PC-3 (cell line): ENCODE measurements at regions of chr5 and their contacts with region 1.

Region 1: DNA sequence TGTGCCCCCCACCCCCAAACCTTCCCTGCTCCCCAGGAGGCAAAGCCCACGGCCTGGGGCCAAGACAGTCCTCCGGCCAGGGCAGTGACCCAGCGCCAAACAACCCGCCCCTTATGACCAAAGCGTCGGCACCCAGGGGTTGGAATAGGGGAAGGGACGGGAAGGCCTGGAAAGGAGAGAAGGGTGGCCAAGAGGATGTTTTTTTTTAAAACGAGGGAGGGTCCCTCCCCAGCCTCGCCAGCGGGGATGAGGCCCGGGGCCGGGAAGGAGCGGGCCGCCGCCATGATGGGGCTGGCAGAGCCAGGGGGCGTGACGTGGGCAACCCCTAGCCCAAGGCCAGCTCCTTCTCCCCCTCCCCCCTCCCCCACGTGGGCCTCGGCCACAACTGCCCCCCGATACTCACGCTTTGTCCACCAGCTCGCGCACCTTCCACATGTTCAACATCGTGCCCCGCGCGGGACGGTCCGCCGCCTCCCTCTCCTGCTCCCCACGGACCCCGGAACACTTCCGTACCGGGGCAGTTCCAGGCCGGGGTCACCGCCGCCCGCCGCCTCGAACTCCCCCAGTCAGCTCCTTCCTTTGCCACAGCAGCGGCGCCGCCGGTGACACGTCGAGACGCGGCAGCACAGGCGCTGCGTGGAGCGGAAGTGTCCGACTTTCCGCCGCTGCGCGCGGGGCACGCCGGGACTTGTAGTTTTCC is at the start of gene CLINT1:
- DNase-seq: peak; percentile 98
- ATAC-seq: peak; percentile 96
- H3K4me3 ChIP-seq: peak within 1 kb of the TSS; percentile 93
- H3K27ac ChIP-seq: peak within 1 kb of the TSS; percentile 41
- H3K4me1 ChIP-seq: peaks cover 19% of the 10 kb centered on the region
- H3K27me3 ChIP-seq: no peaks in the 10 kb centered on the region
- CTCF ChIP-seq: no peak
- total RNA-seq, gene CLINT1: 125 and 131 TPM in 2 replicates

Region 2: DNA sequence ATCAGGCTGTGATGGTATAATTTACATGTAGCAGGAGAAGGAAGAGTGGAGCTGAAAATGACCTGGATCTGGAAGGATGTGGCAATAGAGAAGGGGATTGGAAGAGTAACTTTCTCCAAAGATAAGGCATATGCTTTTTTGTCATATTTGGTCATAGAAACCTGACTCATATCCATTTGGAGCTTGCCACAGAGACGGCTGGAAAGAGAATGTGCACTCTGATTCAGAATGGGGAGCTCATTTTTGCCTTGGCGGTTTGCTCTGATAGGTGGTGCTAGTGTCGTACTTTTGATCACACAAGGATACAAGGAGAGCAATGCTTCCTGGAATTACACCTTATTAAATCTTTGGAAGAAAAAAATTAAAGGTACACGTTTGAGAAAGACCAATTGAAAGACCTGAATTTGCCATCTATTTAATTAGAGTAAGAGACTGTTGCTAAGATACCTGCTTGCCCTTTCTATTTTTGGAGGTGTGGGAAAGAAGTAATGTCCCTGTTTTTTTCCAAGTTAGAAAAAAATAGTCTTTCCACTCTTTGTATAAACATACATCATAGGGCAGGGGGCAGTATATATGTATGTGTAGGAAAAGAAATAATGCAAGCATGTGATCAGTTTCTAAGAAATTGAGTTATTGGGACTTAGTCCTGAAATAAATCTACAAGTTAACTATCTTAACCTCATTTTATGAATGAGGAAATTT is 109.8 kb before region 1 on chr5:
- CTCF ChIA-PET with region 1: interaction called, 16 read pairs
- POLR2A ChIA-PET with region 1: no interaction called
- intact Hi-C with region 1: loop called (anchors 5 kb)
- DNase-seq: peak; percentile 91
- ATAC-seq: peak; percentile 70
- H3K4me3 ChIP-seq: no peak overlapping the region
- H3K27ac ChIP-seq: peak overlapping the region; percentile 19
- H3K4me1 ChIP-seq: peaks cover 43% of the 10 kb centered on the region
- H3K27me3 ChIP-seq: no peaks in the 10 kb centered on the region
- CTCF ChIP-seq: peak; percentile 70

Region 3: GRCh38 chr5:157842787-157843186 is 15.9 kb before region 1 on chr5:
- CTCF ChIA-PET with region 1: interaction called, 3 read pairs
- POLR2A ChIA-PET with region 1: interaction called, 36 read pairs
- intact Hi-C with region 1: no loop called
- DNase-seq: peak; percentile 59
- ATAC-seq: peak; percentile 40
- H3K4me3 ChIP-seq: no peak overlapping the region
- H3K27ac ChIP-seq: no peak overlapping the region
- H3K4me1 ChIP-seq: peaks cover 14% of the 10 kb centered on the region
- H3K27me3 ChIP-seq: no peaks in the 10 kb centered on the region
- CTCF ChIP-seq: no peak

Region 4: GRCh38 chr5:157948738-157949410 is 90.2 kb after region 1 on chr5:
- CTCF ChIA-PET with region 1: interaction called, 7 read pairs
- POLR2A ChIA-PET with region 1: no interaction called
- intact Hi-C with region 1: loop called (anchors 1 kb)
- DNase-seq: peak; percentile 99
- ATAC-seq: peak; percentile 99
- H3K4me3 ChIP-seq: peak overlapping the region; percentile 35
- H3K27ac ChIP-seq: no peak overlapping the region
- H3K4me1 ChIP-seq: peaks cover 8% of the 10 kb centered on the region
- H3K27me3 ChIP-seq: peaks cover 6% of the 10 kb centered on the region; the same call in 1 of the 2 replicates
- CTCF ChIP-seq: peak; percentile 99

Region 5: DNA sequence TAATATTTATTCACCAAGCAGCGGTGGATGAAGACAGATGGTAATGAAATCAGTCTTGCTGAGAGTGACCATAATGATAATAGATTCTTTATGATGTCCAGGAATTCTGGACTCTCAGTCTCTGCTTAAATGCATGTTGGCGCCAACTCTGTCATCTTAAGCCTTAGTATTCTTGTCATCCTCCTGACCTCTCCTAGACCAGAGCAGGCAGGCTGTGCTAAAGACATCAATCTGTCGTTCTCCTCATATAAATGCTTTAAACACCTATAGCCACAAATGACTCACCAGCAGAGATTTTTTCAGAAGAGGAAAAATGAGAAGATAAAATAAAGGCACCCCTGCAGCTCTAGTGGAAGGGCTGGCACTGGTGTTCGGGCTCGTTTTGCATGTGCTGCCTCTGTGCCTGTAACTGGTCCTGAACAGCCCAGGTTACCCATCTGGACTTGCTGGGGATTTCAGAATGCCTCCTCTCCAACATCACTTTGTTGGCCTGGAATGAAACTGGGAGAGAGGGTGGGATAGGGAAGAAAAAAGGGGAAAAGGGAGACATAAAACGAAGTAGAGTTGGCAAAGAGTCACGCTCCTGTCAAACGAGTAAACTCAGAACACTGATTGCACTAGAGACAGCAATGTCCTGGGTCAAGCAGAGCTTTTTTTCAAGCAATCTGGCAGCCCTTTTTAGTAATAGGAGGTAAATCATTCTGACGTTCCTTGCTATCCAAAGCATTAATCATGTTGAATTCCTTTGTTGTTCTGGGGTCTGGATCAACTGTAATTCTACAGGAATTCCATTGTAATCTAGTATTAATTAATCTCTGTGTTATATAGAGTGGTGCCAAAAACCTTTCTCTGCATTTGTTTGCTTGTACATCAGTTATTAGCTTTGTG is 195.8 kb after region 1 on chr5:
- CTCF ChIA-PET with region 1: no interaction called
- POLR2A ChIA-PET with region 1: interaction called, 17 read pairs
- intact Hi-C with region 1: no loop called
- DNase-seq: peak; percentile 63
- ATAC-seq: peak; percentile 18; the same call in 1 of the 2 replicates
- H3K4me3 ChIP-seq: no peak overlapping the region
- H3K27ac ChIP-seq: no peak overlapping the region
- H3K4me1 ChIP-seq: peaks cover 48% of the 10 kb centered on the region
- H3K27me3 ChIP-seq: peaks cover 32% of the 10 kb centered on the region
- CTCF ChIP-seq: no peak